ENCODE measurements at regions of chr4 and their contacts with region 1.

Region 1: GRCh38 chr4:14254252-14254651 is 626.7 kb upstream of the BOD1L1 start:
- DNase-seq: peak; percentile 23
- ATAC-seq: peak; percentile 62
- H3K4me3 Mint-ChIP-seq: no peak overlapping the region
- H3K27ac Mint-ChIP-seq: no peak overlapping the region
- H3K4me1 Mint-ChIP-seq: no peaks in the 10 kb centered on the region
- H3K27me3 Mint-ChIP-seq: no peaks in the 10 kb centered on the region
- CTCF ChIP-seq: no peak

Region 2: DNA sequence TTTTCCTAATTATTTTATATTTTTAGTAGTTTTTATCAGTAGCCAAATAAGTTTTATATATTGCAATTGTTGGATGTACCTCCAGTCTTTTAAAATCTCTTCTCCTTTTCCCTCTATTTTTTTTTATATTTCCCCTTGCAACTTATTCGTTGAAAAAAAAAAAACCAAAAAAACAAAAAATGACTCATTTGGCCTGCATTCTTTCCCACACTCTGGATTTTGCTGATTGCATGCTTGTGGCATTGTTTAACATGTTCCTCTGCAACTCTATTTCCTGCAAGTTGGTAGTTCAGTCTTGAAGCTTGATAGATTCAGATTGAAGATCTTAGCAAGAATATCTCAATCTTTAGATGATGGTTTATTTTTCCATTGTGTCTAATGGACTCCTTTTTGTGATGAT is 366.1 kb before region 1 on chr4:
- CTCF ChIA-PET with region 1: no interaction called
- POLR2A ChIA-PET with region 1: no interaction called
- intact Hi-C with region 1: loop called (anchors 10 kb)
- DNase-seq: no peak
- ATAC-seq: no peak
- H3K4me3 Mint-ChIP-seq: no peak overlapping the region
- H3K27ac Mint-ChIP-seq: no peak overlapping the region
- H3K4me1 Mint-ChIP-seq: no peaks in the 10 kb centered on the region
- H3K27me3 Mint-ChIP-seq: no peaks in the 10 kb centered on the region
- CTCF ChIP-seq: no peak

Region 3: DNA sequence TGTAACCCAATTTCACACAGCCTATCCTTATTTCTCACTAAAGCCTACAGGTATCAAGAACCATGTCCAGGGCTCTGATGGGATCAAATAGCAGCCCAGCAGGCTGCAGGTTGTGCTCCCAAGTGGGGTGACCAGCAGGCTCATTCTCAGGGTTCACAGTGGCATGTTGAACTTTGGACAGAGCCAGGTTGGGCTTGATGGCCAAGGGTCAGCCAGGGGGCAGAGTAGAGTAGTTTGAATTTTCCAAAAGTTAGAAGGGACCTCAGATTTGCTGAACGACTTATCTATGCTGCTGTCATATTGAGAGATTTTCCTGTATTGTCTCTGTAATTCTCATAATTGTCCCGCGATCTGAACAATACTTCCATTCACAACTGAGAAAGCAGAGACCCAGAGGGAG is 316.0 kb before region 1 on chr4:
- CTCF ChIA-PET with region 1: no interaction called
- POLR2A ChIA-PET with region 1: no interaction called
- intact Hi-C with region 1: loop called (anchors 5 kb)
- DNase-seq: no peak
- ATAC-seq: no peak
- H3K4me3 Mint-ChIP-seq: no peak overlapping the region
- H3K27ac Mint-ChIP-seq: no peak overlapping the region
- H3K4me1 Mint-ChIP-seq: no peaks in the 10 kb centered on the region
- H3K27me3 Mint-ChIP-seq: peaks cover 2% of the 10 kb centered on the region
- CTCF ChIP-seq: no peak

Region 4: GRCh38 chr4:14383652-14384051 is 129.4 kb after region 1 on chr4:
- CTCF ChIA-PET with region 1: no interaction called
- POLR2A ChIA-PET with region 1: no interaction called
- intact Hi-C with region 1: no loop called
- DNase-seq: no peak
- ATAC-seq: no peak
- H3K4me3 Mint-ChIP-seq: no peak overlapping the region
- H3K27ac Mint-ChIP-seq: no peak overlapping the region
- H3K4me1 Mint-ChIP-seq: peaks cover 4% of the 10 kb centered on the region
- H3K27me3 Mint-ChIP-seq: peaks cover 6% of the 10 kb centered on the region
- CTCF ChIP-seq: no peak

Measured in activated B cell treated with CpG ODN at 0.5 μM for 24 hours (primary cell).